Activated T-helper 1 cell treated with anti-CD3 and anti-CD28 coated beads, Interleukin-12 subunit alpha, Interleukin-12 subunit beta, Interleukin-2, Interleukin-4 antibody, amounts not matched to agents 30 ng/mL and 10 ng/mL and 1 ng/mL, durations not matched to agents 14 hours and 24 hours and 36 hours (primary cell): ENCODE measurements at regions of chr1 and their contacts with region 1.

Region 1: DNA sequence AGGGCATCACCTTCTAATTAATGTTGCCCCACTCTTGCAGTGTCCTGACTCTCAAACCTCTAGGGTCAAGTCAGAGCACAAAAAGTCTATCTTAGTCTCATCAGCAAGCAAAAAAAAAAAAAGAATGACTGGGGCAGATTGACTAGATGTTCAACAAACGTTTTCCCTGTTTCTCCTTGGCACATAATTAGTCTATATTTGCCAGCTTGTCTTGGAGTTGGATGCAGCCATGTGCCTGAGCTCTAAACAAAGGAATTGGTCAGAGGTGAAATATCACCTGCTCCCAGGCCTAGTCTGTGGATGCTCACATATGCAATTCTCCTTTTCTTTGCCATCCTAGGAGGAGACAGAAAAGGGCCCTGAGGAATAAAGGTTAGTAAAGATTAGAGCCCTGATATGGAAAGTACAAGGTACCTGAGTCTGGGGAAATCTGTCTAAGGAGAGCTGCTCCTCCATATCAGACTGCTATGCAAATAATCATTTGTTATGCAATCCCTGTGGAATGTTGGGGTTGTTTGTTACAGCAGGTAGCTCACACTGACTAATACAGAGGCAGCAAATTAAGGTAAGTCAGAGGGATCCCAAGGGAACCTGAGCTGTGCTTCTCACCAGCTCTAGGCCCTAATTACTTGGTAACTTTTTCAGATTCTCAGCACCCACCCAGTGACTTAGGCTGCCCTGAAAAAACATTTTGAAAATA is 130.8 kb downstream of the BRINP2 start:
- DNase-seq: no peak
- H3K4me3 Mint-ChIP-seq: no peak overlapping the region
- H3K27ac Mint-ChIP-seq: no peak overlapping the region
- H3K4me1 Mint-ChIP-seq: no peaks in the 10 kb centered on the region
- H3K27me3 Mint-ChIP-seq: no peaks in the 10 kb centered on the region

Region 2: GRCh38 chr1:177270863-177271262 is 30.7 kb before region 1 on chr1:
- intact Hi-C with region 1: no loop called
- DNase-seq: no peak
- H3K4me3 Mint-ChIP-seq: no peak overlapping the region
- H3K27ac Mint-ChIP-seq: no peak overlapping the region
- H3K4me1 Mint-ChIP-seq: no peaks in the 10 kb centered on the region
- H3K27me3 Mint-ChIP-seq: no peaks in the 10 kb centered on the region

Region 3: GRCh38 chr1:177340601-177341067 is 39.1 kb after region 1 on chr1:
- intact Hi-C with region 1: loop called (anchors 1 kb)
- DNase-seq: no peak
- H3K4me3 Mint-ChIP-seq: no peak overlapping the region
- H3K27ac Mint-ChIP-seq: no peak overlapping the region
- H3K4me1 Mint-ChIP-seq: no peaks in the 10 kb centered on the region
- H3K27me3 Mint-ChIP-seq: peaks cover 2% of the 10 kb centered on the region

Region 4: DNA sequence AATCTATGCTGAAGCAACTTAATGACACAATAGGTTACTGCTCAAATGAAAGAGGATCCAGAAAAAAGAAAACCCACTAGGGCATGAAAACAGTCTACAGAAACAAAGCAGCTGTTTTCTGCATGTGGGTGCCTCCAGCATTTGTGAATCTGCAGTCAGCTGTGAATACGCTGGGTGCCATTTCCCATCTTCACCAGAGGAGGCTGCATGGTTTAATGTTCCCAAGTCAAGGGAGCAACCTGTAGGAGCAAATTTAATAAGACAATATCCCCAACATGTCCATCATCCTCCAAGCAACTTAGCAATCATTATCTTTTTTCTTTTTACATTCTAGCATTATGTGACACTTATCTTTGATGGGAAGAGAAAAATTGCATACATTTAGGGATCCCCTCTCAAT is 265.8 kb after region 1 on chr1:
- intact Hi-C with region 1: no loop called
- DNase-seq: no peak
- H3K4me3 Mint-ChIP-seq: no peak overlapping the region
- H3K27ac Mint-ChIP-seq: no peak overlapping the region
- H3K4me1 Mint-ChIP-seq: no peaks in the 10 kb centered on the region
- H3K27me3 Mint-ChIP-seq: no peaks in the 10 kb centered on the region